H1 (cell line): ENCODE measurements at regions of chr1 and their contacts with region 1.

Region 1: GRCh38 chr1:116139592-116140134 is 28.5 kb downstream of the MAB21L3 start:
- DNase-seq: no peak
- H3K4me3 ChIP-seq: no peak overlapping the region
- H3K27ac ChIP-seq: no peak overlapping the region
- H3K4me1 ChIP-seq: no peaks in the 10 kb centered on the region
- H3K27me3 ChIP-seq: no peaks in the 10 kb centered on the region
- CTCF ChIP-seq: no peak
- EP300 ChIP-seq: no peak
- POLR2A ChIP-seq: no peak
- RAD21 ChIP-seq: no peak

Region 2: GRCh38 chr1:115980998-115981993 is 158.4 kb before region 1 on chr1:
- CTCF ChIA-PET with region 1: no interaction called
- POLR2A ChIA-PET with region 1: no interaction called
- DNase-seq: no peak
- H3K4me3 ChIP-seq: no peak overlapping the region
- H3K27ac ChIP-seq: no peak overlapping the region
- H3K4me1 ChIP-seq: peaks cover 0 to 19% (median 9%) of the 10 kb centered on the region in 4 experiments; a peak in 5 of 7 replicates
- H3K27me3 ChIP-seq: no peaks in the 10 kb centered on the region
- CTCF ChIP-seq: peak; percentile 16 to 82 (median 70)
- EP300 ChIP-seq: no peak
- POLR2A ChIP-seq: no peak
- RAD21 ChIP-seq: peak; percentile 95 to 96

Region 3: DNA sequence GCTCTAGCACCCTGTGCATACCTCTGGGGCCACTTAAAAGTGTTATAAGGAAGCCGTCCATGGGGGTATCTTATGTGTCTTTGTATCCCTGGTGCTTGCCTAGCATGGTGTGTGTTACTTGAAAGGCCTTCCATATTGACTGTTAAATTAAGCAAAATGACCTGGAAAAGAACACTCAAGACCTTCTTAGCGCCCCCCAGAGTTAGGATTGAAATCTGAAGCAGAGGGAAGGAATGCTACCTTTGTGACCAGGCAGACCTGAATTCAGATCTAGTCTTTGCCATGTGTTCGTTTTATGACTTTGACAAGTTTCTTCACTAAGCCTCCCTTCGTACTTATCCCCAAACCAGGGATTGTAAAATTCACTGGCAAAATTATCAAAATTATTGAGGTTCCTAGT is 103.4 kb before region 1 on chr1:
- CTCF ChIA-PET with region 1: no interaction called
- POLR2A ChIA-PET with region 1: no interaction called
- DNase-seq: peak in 1 of 2 experiments; percentile 47
- H3K4me3 ChIP-seq: no peak overlapping the region
- H3K27ac ChIP-seq: no peak overlapping the region
- H3K4me1 ChIP-seq: no peaks in the 10 kb centered on the region
- H3K27me3 ChIP-seq: no peaks in the 10 kb centered on the region
- CTCF ChIP-seq: peak in 2 of 3 experiments; percentile 22 to 68; a peak in 2 of 4 replicates
- EP300 ChIP-seq: no peak
- POLR2A ChIP-seq: no peak
- RAD21 ChIP-seq: peak in 1 of 2 experiments; percentile 22; a peak in 2 of 4 replicates

Region 4: DNA sequence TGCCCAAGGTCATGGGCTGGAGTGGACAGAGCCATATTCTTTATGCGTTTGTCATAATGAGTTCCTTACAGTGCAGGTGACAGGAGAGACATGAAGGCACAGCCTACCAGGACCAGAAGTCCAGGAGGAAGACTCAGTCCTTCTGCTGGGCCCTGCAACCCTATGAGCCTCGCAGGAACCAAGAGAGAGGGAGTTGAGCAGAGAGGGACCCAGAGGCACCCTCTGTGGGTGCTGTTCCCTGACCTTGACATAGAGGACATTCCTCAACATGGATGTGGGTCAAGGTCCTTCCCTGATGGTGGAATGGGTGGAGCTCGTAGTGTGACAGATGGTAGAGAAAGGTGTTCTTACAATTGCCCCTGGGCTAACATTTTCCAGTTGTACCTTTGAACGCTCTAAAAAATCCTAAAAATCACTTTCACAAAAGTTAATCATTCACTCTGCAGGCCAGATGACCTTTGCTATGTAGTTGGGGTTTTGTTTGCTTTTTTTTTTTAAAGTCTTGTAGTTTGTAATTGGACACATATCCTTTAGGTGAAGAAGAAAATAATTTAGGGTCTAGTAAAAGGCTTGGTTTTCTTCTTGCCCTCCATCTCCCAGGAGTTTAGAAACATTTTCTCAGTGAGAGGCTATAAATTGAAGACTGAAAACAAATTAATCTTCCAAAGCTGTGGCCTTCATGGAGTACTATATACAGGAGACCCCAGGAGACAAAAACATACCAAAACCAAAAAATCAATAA is 13.5 kb after region 1 on chr1:
- CTCF ChIA-PET with region 1: interaction called, 19 read pairs
- POLR2A ChIA-PET with region 1: no interaction called
- DNase-seq: no peak
- H3K4me3 ChIP-seq: no peak overlapping the region
- H3K27ac ChIP-seq: no peak overlapping the region
- H3K4me1 ChIP-seq: 0 out of 7 replicates have a peak, but pooled peaks cover 0 to 2% (median 0%) of the 10 kb centered on the region in 4 experiments
- H3K27me3 ChIP-seq: peaks cover 0 to 6% (median 5%) of the 10 kb centered on the region in 4 experiments; a peak in 4 of 7 replicates
- CTCF ChIP-seq: no peak
- EP300 ChIP-seq: no peak
- POLR2A ChIP-seq: no peak
- RAD21 ChIP-seq: no peak

Region 5: DNA sequence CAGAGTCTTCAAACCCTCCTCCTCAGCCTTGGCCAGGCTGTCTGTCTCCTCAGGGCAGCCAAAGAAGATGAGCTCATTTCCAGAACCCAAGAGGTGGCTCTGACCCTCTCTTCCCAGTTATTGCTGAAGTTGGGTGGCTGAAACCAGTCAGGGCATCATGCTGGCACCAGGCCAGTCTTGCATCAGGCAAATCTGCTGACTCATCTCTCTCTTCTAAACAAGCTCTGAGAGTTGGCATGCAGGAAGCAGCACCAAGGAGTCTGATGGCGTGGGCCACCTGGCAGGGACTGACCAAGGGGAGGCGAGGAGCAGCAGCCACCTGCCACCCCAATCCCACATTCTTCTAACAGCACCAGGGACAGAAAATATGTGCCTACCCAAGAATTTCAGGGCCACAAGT is 128.5 kb after region 1 on chr1:
- CTCF ChIA-PET with region 1: interaction called, 16 read pairs
- POLR2A ChIA-PET with region 1: no interaction called
- DNase-seq: no peak
- H3K4me3 ChIP-seq: no peak overlapping the region
- H3K27ac ChIP-seq: no peak overlapping the region
- H3K4me1 ChIP-seq: no peaks in the 10 kb centered on the region
- H3K27me3 ChIP-seq: no peaks in the 10 kb centered on the region
- CTCF ChIP-seq: no peak
- EP300 ChIP-seq: no peak
- POLR2A ChIP-seq: no peak
- RAD21 ChIP-seq: no peak

Region 6: GRCh38 chr1:116334015-116334547 is 194.4 kb after region 1 on chr1:
- CTCF ChIA-PET with region 1: no interaction called
- POLR2A ChIA-PET with region 1: no interaction called
- DNase-seq: no peak
- H3K4me3 ChIP-seq: no peak overlapping the region
- H3K27ac ChIP-seq: no peak overlapping the region
- H3K4me1 ChIP-seq: peaks cover 0 to 6% (median 1%) of the 10 kb centered on the region in 4 experiments; a peak in 1 of 7 replicates
- H3K27me3 ChIP-seq: no peaks in the 10 kb centered on the region
- CTCF ChIP-seq: no peak
- EP300 ChIP-seq: no peak
- POLR2A ChIP-seq: no peak
- RAD21 ChIP-seq: no peak

Region 7: GRCh38 chr1:116390195-116390594 is 250.5 kb after region 1 on chr1:
- CTCF ChIA-PET with region 1: interaction called, 10 read pairs
- POLR2A ChIA-PET with region 1: no interaction called
- DNase-seq: no peak
- H3K4me3 ChIP-seq: no peak overlapping the region
- H3K27ac ChIP-seq: no peak overlapping the region
- H3K4me1 ChIP-seq: no peaks in the 10 kb centered on the region
- H3K27me3 ChIP-seq: peaks cover 0 to 1% (median 0%) of the 10 kb centered on the region in 4 experiments; a peak in 1 of 7 replicates
- CTCF ChIP-seq: no peak
- EP300 ChIP-seq: no peak
- POLR2A ChIP-seq: no peak
- RAD21 ChIP-seq: no peak

Region 8: DNA sequence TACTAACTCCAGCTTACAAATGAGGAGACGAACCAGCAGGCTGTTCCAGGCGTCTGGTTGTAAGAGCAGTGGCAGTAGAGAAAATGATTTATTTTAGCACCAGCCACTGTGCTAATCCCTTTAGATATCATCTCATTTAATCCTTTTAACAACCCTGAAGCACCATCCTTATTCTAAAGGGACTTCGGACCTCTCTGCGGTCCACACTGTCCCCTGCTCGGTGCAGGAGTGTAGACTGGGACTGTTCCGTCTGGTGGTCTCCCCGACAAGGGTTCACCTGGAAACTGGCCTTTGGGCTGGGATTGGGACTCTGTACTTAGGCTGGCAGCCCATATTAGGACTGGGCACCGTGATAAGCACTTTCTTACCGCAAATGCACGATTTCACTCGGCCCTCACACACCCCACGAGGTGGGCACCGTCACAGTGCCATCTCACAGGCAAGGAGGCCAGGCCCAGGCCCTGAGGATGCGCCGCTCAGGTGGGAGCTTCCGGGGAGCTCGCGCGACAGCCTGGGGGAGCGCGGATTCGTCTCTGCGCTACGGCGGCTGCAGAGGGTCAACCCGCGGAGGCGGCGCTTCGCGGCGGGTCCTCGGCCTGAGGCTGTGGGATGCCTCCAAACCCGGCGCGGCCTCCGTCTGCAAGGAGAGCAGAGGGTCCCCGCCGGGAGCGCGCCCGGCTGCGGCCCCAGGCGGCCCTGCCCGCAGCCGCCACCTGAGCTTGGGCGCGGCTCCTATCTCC is 278.6 kb after region 1 on chr1:
- CTCF ChIA-PET with region 1: interaction called, 20 read pairs
- POLR2A ChIA-PET with region 1: no interaction called
- DNase-seq: peak; percentile 53 to 92
- H3K4me3 ChIP-seq: peak overlapping the region; percentile 68 to 95 (median 82)
- H3K27ac ChIP-seq: peak overlapping the region; percentile 24; the same call in 1 of the 2 replicates
- H3K4me1 ChIP-seq: peaks cover 0 to 11% (median 6%) of the 10 kb centered on the region in 4 experiments; a peak in 6 of 7 replicates
- H3K27me3 ChIP-seq: no peaks in the 10 kb centered on the region
- CTCF ChIP-seq: no peak
- EP300 ChIP-seq: no peak
- POLR2A ChIP-seq: peak; percentile 76 to 94
- RAD21 ChIP-seq: peak in 1 of 2 experiments; percentile 11; a peak in 2 of 4 replicates

Region 9: DNA sequence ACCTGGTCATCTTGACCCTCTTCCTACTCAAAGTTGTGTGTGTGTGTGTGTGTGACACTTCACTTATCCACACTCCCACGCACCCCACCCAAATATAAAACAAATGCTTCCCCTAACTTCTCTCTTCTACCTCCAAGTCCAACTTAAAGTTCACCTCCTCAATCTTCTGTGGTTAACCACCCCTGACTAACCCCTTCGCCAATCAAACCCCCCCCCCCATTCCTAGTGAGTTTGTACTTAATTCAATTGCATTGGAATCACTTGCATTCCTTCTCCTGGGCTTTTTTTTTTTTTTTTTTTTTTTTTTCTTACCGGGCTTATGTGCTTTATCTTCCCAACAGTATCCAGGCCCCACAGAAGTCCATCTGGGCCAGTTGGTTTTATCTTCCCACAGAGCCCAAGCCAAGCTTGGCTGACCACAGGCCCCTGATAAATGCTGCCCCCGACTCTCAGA is 352.7 kb after region 1 on chr1:
- CTCF ChIA-PET with region 1: interaction called, 115 read pairs
- POLR2A ChIA-PET with region 1: no interaction called
- DNase-seq: no peak
- H3K4me3 ChIP-seq: no peak overlapping the region
- H3K27ac ChIP-seq: no peak overlapping the region
- H3K4me1 ChIP-seq: no peaks in the 10 kb centered on the region; a peak in 1 of 7 replicates
- H3K27me3 ChIP-seq: no peaks in the 10 kb centered on the region
- CTCF ChIP-seq: no peak
- EP300 ChIP-seq: no peak
- POLR2A ChIP-seq: no peak
- RAD21 ChIP-seq: no peak